ENCODE measurements at regions of chr5 and their contacts with region 1.

Region 1: GRCh38 chr5:169583424-169584204 is at the start of gene SPDL1:
- DNase-seq: peak; percentile 93
- H3K4me3 ChIP-seq: peak within 1 kb of the TSS; percentile 85 to 98 (median 92)
- H3K27ac ChIP-seq: peak within 1 kb of the TSS; percentile 84
- H3K4me1 ChIP-seq: peaks cover 16% of the 10 kb centered on the region
- H3K27me3 ChIP-seq: no peaks in the 10 kb centered on the region
- CTCF ChIP-seq: no peak
- total RNA-seq, gene SPDL1: 7.7 to 31.1 TPM

Region 2: GRCh38 chr5:168486136-168486879 is 1097.3 kb before region 1 on chr5 and contains the start of gene RARS1:
- CTCF ChIA-PET with region 1: no interaction called
- dilution Hi-C with region 1: no loop called
- in situ Hi-C with region 1: no loop called
- intact Hi-C with region 1: loop called (anchors 2 kb)
- DNase-seq: peak; percentile 88
- H3K4me3 ChIP-seq: peak within 1 kb of the TSS; percentile 77 to 95 (median 88)
- H3K27ac ChIP-seq: peak within 1 kb of the TSS; percentile 70
- H3K4me1 ChIP-seq: peaks cover 7% of the 10 kb centered on the region
- H3K27me3 ChIP-seq: no peaks in the 10 kb centered on the region
- CTCF ChIP-seq: peak; percentile 92 to 99
- total RNA-seq, gene RARS1: 107 to 132 TPM

Region 3: DNA sequence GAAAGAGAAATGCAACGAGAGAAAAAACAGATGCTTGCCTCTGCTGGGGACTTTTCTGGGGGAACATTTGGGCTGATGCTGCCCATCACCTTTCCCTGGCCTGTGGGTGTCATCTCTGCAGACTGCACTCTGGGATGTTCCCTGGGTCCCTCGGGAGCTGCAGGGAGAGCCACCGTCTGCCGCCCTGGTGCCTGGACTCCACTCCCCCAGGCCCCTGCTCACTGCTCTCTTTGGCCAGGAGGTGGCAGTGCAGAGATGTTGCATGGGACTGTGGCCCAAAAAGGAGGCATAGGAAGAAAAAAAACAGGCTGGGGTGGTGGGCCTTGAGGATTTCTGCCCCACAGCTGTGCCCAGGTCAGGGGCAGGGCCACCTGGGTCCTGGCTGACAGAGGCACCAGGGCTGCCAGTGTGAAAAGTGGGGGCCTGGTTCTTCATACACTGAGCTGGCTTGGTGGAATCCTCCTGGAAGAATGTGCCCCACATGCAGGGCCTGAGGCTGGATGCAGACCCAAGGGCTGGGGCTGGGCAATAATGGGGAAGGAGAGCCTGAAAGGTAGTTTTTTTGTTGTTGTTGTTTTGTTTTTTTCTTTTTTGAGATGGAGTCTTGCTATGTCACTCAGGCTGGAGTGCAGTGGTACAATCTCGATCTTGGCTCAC is 636.3 kb before region 1 on chr5:
- CTCF ChIA-PET with region 1: no interaction called
- dilution Hi-C with region 1: no loop called
- in situ Hi-C with region 1: no loop called
- intact Hi-C with region 1: loop called (anchors 1 kb)
- DNase-seq: peak; percentile 24
- H3K4me3 ChIP-seq: no peak overlapping the region
- H3K27ac ChIP-seq: no peak overlapping the region
- H3K4me1 ChIP-seq: no peaks in the 10 kb centered on the region
- H3K27me3 ChIP-seq: no peaks in the 10 kb centered on the region
- CTCF ChIP-seq: peak; percentile 77 to 78

Region 4: DNA sequence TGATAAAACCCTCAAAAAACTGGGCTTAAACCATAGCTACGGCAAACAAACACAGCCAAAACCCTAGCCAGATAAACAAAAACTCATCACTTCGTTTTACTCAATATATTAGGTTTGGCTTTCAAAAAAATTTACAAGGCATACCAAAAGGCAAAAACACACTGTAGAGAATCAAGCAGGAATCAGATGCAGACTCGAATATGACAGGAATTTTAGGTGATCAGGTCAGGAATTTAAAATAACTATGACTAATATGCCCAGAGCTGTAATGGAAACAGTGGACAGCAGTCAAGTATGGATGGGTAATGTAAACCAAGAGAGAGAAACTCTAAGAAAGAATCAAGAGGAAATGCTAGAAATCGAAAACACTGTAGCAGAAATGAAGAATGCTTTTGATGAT is 27.0 kb after region 1 on chr5:
- CTCF ChIA-PET with region 1: interaction called, 13 read pairs
- dilution Hi-C with region 1: no loop called
- in situ Hi-C with region 1: no loop called
- intact Hi-C with region 1: no loop called
- DNase-seq: peak; percentile 6
- H3K4me3 ChIP-seq: no peak overlapping the region
- H3K27ac ChIP-seq: no peak overlapping the region
- H3K4me1 ChIP-seq: no peaks in the 10 kb centered on the region
- H3K27me3 ChIP-seq: no peaks in the 10 kb centered on the region
- CTCF ChIP-seq: no peak

Region 5: GRCh38 chr5:169686137-169686536 is 102.5 kb after region 1 on chr5:
- CTCF ChIA-PET with region 1: no interaction called
- dilution Hi-C with region 1: no loop called
- in situ Hi-C with region 1: no loop called
- intact Hi-C with region 1: no loop called
- DNase-seq: no peak
- H3K4me3 ChIP-seq: no peak overlapping the region
- H3K27ac ChIP-seq: no peak overlapping the region
- H3K4me1 ChIP-seq: no peaks in the 10 kb centered on the region
- H3K27me3 ChIP-seq: no peaks in the 10 kb centered on the region
- CTCF ChIP-seq: no peak

Region 6: GRCh38 chr5:170070556-170071412 is 487.2 kb after region 1 on chr5:
- CTCF ChIA-PET with region 1: interaction called, 5 read pairs
- dilution Hi-C with region 1: no loop called
- in situ Hi-C with region 1: no loop called
- intact Hi-C with region 1: loop called (anchors 10 kb)
- DNase-seq: peak; percentile 9
- H3K4me3 ChIP-seq: no peak overlapping the region
- H3K27ac ChIP-seq: no peak overlapping the region
- H3K4me1 ChIP-seq: no peaks in the 10 kb centered on the region
- H3K27me3 ChIP-seq: peaks cover 3% of the 10 kb centered on the region
- CTCF ChIP-seq: peak; percentile 62 to 77